ENCODE measurements at regions of chr17 and their contacts with region 1.

Region 1: GRCh38 chr17:20121359-20122253 is 112.4 kb downstream of the SPECC1 start:
- DNase-seq: peak; percentile 54
- H3K4me3 Mint-ChIP-seq: no peak overlapping the region
- H3K27ac Mint-ChIP-seq: no peak overlapping the region
- H3K4me1 Mint-ChIP-seq: peaks cover 14% of the 10 kb centered on the region
- H3K27me3 Mint-ChIP-seq: peaks cover 11% of the 10 kb centered on the region
- CTCF ChIP-seq: peak; percentile 75

Region 2: DNA sequence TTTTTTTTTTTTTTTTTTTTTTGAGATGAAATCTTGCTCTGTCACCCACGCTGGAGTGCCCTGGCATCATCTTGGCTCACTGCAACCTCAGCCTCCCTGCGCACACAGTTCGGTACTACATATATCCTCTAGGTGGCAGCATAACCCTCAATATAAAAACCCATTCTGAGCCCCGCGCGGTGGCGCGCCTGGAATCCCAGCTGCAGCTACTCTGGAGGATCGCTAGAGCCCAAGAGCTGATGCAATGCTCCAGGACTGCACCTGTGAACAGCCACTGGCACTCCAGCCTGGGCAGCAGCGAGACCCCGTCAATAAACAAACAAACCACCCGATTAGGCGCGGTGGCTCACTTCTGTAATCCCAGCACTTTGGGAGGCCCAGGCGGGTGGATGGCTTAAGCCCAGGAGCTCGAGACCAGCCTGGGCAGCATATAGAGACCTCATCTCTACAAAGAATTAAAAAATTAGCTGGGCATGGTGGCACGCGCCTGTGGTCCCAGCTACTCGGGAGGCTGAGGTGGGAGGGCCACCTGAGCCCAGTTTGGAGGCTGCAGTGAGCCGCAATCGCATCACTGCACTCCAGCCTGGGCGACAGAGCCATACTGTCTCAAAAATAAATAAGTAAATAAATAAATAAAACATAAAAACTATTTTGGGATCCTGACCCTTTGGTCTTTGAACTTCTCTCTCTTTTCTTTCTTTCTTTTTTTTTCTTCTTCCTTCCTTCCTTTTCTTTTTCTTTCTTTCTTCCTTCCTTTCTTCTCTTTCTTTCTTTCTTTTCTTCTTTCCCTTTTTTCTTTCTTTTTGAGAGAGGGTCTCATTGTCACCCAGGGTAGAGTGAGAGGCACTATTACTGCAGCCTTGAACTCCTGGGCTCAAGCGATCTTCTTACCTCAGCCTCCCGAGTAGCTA is 128.5 kb before region 1 on chr17:
- CTCF ChIA-PET with region 1: interaction called, 18 read pairs
- intact Hi-C with region 1: loop called (anchors 1 kb)
- DNase-seq: peak; percentile 78
- H3K4me3 Mint-ChIP-seq: no peak overlapping the region
- H3K27ac Mint-ChIP-seq: no peak overlapping the region
- H3K4me1 Mint-ChIP-seq: no peaks in the 10 kb centered on the region
- H3K27me3 Mint-ChIP-seq: peaks cover 14% of the 10 kb centered on the region
- CTCF ChIP-seq: peak; percentile 36

Region 3: DNA sequence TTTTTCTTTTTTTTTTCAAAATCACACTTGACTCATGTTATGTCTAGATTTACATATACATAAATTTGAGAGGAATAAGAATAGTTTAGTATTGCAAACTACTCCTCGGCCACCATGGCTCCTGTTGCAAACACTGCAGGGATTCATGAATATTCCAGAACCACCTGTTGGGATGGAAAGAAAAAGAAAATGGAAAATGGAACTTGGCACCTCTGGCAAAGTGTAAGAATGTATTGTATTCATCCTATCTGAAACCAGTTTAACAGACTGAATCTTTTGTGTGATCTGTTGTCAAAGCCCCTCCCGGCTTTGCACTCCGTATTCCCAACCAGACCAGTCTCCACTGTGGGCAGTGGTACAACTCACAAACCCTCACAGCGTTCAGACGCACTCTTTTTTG is 11.9 kb after region 1 on chr17:
- CTCF ChIA-PET with region 1: no interaction called
- intact Hi-C with region 1: no loop called
- DNase-seq: no peak
- H3K4me3 Mint-ChIP-seq: no peak overlapping the region
- H3K27ac Mint-ChIP-seq: no peak overlapping the region
- H3K4me1 Mint-ChIP-seq: no peaks in the 10 kb centered on the region
- H3K27me3 Mint-ChIP-seq: no peaks in the 10 kb centered on the region
- CTCF ChIP-seq: no peak

Region 4: DNA sequence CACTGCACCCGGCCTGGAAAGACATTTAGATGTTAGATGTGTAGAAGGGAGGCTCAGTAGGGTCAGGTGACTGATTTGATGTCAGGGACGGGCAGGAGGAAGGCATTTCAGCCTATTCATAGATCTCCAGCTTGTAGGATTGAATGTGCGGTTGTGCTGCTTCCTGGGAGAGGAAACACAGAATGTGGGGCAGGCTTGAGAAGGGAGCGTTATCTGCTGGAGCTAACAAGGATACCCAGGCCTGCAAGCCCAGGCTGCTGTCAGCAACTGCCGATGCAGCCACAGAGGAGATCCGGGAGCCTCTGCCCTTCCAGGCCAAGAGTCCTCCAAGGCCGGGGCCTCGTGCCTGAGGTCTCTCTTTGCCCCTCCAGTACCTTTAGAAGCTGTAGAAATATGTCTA is 93.2 kb after region 1 on chr17:
- CTCF ChIA-PET with region 1: no interaction called
- intact Hi-C with region 1: no loop called
- DNase-seq: no peak
- H3K4me3 Mint-ChIP-seq: no peak overlapping the region
- H3K27ac Mint-ChIP-seq: no peak overlapping the region
- H3K4me1 Mint-ChIP-seq: peaks cover 31% of the 10 kb centered on the region
- H3K27me3 Mint-ChIP-seq: no peaks in the 10 kb centered on the region
- CTCF ChIP-seq: no peak

Region 5: DNA sequence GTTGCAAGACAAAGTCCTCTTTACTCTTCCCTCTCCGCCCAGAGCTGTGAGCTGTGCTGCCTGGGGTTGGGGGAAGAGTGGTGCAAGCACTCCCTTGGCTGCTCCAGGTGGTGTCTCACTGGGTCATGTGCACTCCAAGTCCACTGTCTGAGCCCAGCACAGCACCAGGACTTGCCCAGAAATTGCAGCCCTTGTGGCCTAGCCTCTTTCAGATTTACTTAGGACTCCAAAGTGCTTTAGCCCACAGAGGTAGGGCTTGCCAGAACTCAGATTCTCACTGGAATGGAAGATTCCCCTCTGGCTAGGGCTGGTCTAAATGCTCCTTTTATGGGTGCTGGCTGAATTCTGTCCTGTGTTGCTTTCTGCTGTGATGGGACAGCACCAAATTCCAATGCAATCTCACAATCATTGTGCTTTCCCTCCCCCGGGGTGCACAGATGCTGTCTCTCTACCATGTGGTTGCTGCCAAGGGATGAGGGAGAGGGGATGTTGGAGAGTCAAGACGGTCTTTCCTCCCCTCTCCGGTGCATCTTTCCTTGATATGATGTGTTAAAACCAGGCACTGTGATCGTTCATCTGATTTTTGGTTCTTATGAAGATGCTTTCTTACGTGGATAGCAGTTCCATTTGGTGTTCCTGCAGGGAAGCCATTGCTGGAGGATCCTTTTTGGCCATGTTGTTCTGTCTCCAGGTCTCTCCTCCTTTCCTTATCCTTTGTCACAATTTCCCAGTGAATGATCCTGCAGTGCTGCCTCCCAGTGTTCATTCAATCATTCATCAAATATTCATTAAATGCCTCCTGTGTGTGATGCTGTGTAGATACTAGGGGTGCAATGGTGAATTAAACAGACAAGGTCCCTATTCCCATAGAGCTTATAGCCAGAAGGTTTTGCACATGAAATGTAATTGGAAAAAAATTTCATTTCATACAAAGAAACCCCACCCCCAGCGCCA is 103.8 kb after region 1 on chr17:
- CTCF ChIA-PET with region 1: interaction called, 8 read pairs
- intact Hi-C with region 1: loop called (anchors 1 kb)
- DNase-seq: no peak
- H3K4me3 Mint-ChIP-seq: no peak overlapping the region
- H3K27ac Mint-ChIP-seq: no peak overlapping the region
- H3K4me1 Mint-ChIP-seq: peaks cover 11% of the 10 kb centered on the region
- H3K27me3 Mint-ChIP-seq: no peaks in the 10 kb centered on the region
- CTCF ChIP-seq: no peak

Region 6: GRCh38 chr17:20315821-20316220 is 194.2 kb after region 1 on chr17:
- CTCF ChIA-PET with region 1: no interaction called
- intact Hi-C with region 1: loop called (anchors 2 kb)
- DNase-seq: no peak
- H3K4me3 Mint-ChIP-seq: no peak overlapping the region
- H3K27ac Mint-ChIP-seq: no peak overlapping the region
- H3K4me1 Mint-ChIP-seq: no peaks in the 10 kb centered on the region
- H3K27me3 Mint-ChIP-seq: no peaks in the 10 kb centered on the region
- CTCF ChIP-seq: no peak